Calu3 (cell line): ENCODE measurements at regions of chr5 and their contacts with region 1.

Region 1: GRCh38 chr5:155489949-155490348 is 476.4 kb downstream of the KIF4B start:
- DNase-seq: no peak
- H3K4me3 Mint-ChIP-seq: no peak overlapping the region
- H3K27ac Mint-ChIP-seq: no peak overlapping the region
- H3K4me1 Mint-ChIP-seq: no peaks in the 10 kb centered on the region
- H3K27me3 Mint-ChIP-seq: no peaks in the 10 kb centered on the region
- CTCF ChIP-seq: no peak

Region 2: DNA sequence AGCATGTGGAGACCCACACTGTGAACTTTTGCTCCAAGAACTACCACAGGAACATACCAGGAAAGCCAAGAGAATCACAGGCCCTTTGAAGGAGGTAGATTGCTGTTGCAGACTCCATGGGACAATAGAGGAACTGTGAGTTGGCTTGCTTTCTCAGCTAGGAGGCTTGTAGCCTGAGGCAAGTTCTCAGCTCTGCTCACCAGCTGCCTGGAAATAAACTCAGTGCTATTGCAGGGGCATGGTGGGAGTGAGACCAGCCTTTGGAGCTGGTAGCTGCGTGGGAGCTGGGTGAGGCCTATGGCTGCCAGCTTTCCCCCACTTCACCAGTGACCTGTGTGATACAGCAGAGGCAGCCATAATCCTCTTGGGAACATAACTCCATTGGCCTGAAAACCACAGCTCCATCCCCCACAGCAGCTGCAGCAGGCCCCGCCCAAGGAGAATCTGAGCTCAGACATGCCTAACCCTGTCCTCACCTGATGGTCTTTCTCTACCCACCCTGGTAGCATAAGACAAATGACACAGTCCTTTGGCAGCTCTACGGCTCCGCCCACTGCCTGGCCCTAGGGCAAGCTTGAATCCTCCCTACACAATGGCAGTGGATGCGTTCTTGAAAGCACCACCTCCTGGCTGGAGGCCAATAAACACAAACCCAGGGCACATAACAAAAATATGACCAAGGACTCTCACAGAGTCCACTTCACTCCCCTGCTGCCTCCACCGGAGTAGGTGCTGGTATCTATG is 86.8 kb before region 1 on chr5:
- CTCF ChIA-PET with region 1: interaction called, 10 read pairs
- intact Hi-C with region 1: no loop called
- DNase-seq: no peak
- H3K4me3 Mint-ChIP-seq: no peak overlapping the region
- H3K27ac Mint-ChIP-seq: no peak overlapping the region
- H3K4me1 Mint-ChIP-seq: no peaks in the 10 kb centered on the region
- H3K27me3 Mint-ChIP-seq: no peaks in the 10 kb centered on the region
- CTCF ChIP-seq: no peak

Region 3: GRCh38 chr5:155434681-155435080 is 55.3 kb before region 1 on chr5:
- CTCF ChIA-PET with region 1: no interaction called
- intact Hi-C with region 1: no loop called
- DNase-seq: no peak
- H3K4me3 Mint-ChIP-seq: no peak overlapping the region
- H3K27ac Mint-ChIP-seq: no peak overlapping the region
- H3K4me1 Mint-ChIP-seq: no peaks in the 10 kb centered on the region
- H3K27me3 Mint-ChIP-seq: no peaks in the 10 kb centered on the region
- CTCF ChIP-seq: no peak

Region 4: DNA sequence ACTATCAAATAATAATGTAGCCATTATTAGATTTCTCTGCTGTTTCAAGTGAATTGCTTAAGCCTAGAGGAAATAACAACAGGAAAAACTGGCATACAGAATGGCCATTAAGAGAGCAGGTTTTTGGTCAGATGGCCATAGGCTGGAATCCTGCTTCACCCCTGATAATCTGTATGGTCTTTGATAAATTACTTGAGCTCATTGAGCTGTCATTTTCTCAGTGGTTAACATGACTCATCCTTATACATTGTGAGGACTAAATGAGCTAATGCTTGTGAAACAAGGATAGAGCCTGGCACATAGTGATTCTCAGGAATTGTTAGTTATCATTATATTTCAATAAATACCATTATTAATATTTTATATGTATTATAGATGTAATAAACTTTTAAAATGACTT is 40.1 kb after region 1 on chr5:
- CTCF ChIA-PET with region 1: no interaction called
- intact Hi-C with region 1: no loop called
- DNase-seq: no peak
- H3K4me3 Mint-ChIP-seq: no peak overlapping the region
- H3K27ac Mint-ChIP-seq: no peak overlapping the region
- H3K4me1 Mint-ChIP-seq: no peaks in the 10 kb centered on the region
- H3K27me3 Mint-ChIP-seq: no peaks in the 10 kb centered on the region
- CTCF ChIP-seq: no peak

Region 5: DNA sequence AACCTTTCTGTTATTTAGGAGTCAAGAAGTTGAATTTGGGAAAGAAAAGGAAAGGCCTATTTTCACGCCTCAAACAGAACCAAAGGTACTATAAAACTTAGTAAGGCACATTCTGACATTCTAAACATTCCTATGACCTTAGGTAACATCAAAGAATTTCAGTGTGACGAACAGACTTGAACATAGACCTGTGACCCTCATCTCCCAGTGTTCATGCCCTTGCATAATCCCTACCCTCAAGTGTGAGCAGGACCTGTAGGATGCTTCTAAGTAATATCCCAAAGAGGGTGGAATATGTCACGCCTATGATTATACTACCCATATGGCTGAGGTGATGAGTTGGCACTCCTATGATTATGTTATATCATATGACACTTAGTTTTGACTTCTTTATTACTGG is 64.6 kb after region 1 on chr5:
- CTCF ChIA-PET with region 1: no interaction called
- intact Hi-C with region 1: no loop called
- DNase-seq: no peak
- H3K4me3 Mint-ChIP-seq: no peak overlapping the region
- H3K27ac Mint-ChIP-seq: no peak overlapping the region
- H3K4me1 Mint-ChIP-seq: no peaks in the 10 kb centered on the region
- H3K27me3 Mint-ChIP-seq: no peaks in the 10 kb centered on the region
- CTCF ChIP-seq: no peak